ENCODE measurements at regions of chr15 and their contacts with region 1.

Region 1: GRCh38 chr15:34708422-34708821 is 46.4 kb downstream of the GJD2 start:
- DNase-seq: peak in 3 of 10 donors; percentile 16 to 48 (median 39)
- H3K4me3 ChIP-seq: peak overlapping the region in 9 of 59 donors; percentile 9 to 38 (median 24)
- H3K27ac ChIP-seq: no peak overlapping the region
- H3K27me3 ChIP-seq: no peaks in the 10 kb centered on the region
- CTCF ChIP-seq: peak; percentile 45 to 93 (median 77)

Region 2: GRCh38 chr15:34927726-34928125 is 219.3 kb after region 1 on chr15:
- intact Hi-C with region 1: loop called in 1 of 2 experiments (anchors 5 kb)
- DNase-seq: no peak
- H3K4me3 ChIP-seq: no peak overlapping the region
- H3K27ac ChIP-seq: no peak overlapping the region
- H3K27me3 ChIP-seq: no peaks in the 10 kb centered on the region
- CTCF ChIP-seq: no peak